ENCODE measurements at regions of chr13 and their contacts with region 1.

Region 1: DNA sequence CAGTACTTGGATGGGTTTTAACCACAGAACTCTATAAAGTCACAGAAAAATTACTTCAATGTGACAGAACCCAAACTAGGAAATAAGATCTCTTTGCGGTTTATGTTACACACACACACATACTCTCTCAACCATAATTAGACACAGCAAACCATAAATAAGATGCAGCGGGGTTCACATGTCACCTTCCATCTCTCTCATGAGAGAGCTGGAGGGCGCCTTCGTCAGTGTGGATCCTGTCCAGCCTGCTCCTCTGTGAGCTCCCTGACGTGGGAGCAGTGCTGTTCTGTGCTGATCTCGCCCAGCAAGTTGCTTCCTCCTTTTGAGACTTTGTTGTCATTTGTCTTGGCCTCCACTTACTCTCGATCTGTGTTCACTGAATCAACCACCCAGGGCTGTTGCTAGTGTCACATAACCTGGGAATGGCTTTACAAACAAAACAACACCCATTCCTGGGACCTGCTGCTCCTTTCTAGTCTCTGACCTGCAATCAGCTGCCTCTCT is 204.9 kb upstream of the KL start:
- DNase-seq: peak in 5 of 9 donors; percentile 10 to 28 (median 16)
- ATAC-seq: peak; percentile 67
- H3K4me3 ChIP-seq: no peak overlapping the region
- H3K4me3 Mint-ChIP-seq: peak overlapping the region; percentile 52 to 81 (median 70)
- H3K27ac ChIP-seq: no peak overlapping the region
- H3K27ac Mint-ChIP-seq: peak overlapping the region in 7 of 9 donors; percentile 17 to 90 (median 65)
- H3K4me1 ChIP-seq: peaks cover 0 to 9% of the 10 kb centered on the region in 2 donors
- H3K4me1 Mint-ChIP-seq: peaks cover 11 to 23% (median 18%) of the 10 kb centered on the region in 7 donors
- H3K27me3 ChIP-seq: no peaks in the 10 kb centered on the region
- H3K27me3 Mint-ChIP-seq: peaks cover 0 to 8% (median 3%) of the 10 kb centered on the region in 5 donors

Region 2: DNA sequence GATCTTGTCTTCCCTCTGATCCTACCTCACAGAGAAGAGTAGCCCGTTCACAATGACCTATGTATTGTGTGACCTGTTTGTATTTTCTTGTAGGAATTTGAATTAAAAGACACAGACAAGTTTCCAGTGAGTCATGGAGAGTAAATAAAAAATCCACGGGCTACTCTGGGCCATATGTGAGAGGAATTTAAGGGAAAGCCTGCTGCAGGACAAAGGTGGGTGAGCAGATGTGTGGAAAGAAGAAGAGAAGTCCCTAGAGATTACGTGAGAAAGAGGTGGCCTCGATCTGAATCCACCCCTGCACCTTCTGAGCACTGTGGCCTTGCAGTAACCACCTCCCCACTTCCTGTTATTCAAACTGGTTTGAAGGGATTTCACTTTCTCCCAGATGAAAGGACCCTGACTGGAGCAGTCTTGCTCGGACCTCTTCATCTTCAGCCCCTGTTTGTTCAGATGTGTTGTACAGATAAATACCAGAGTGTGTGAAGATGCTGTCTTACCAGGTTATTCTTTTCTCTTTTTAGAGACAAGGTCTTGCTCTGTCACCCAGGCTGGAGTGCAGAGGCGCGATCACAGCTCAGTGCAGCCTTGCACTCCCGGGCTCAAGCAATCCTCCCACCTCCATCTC is 19.7 kb before region 1 on chr13:
- CTCF ChIA-PET with region 1: no interaction called
- POLR2A ChIA-PET with region 1: no interaction called
- intact Hi-C with region 1: loop called in 1 of 2 experiments (anchors 2 kb)
- DNase-seq: peak in 7 of 9 donors; percentile 35 to 61 (median 47)
- ATAC-seq: peak; percentile 82
- H3K4me3 ChIP-seq: no peak overlapping the region
- H3K4me3 Mint-ChIP-seq: peak overlapping the region; percentile 14 to 75 (median 59)
- H3K27ac ChIP-seq: peak overlapping the region; percentile 55
- H3K27ac Mint-ChIP-seq: peak overlapping the region; percentile 77 to 96 (median 90)
- H3K4me1 ChIP-seq: peaks cover 0 to 28% of the 10 kb centered on the region in 2 donors
- H3K4me1 Mint-ChIP-seq: peaks cover 25 to 64% (median 50%) of the 10 kb centered on the region in 7 donors
- H3K27me3 ChIP-seq: no peaks in the 10 kb centered on the region
- H3K27me3 Mint-ChIP-seq: no peaks in the 10 kb centered on the region